ENCODE measurements at regions of chr17 and their contacts with region 1.

Region 1: DNA sequence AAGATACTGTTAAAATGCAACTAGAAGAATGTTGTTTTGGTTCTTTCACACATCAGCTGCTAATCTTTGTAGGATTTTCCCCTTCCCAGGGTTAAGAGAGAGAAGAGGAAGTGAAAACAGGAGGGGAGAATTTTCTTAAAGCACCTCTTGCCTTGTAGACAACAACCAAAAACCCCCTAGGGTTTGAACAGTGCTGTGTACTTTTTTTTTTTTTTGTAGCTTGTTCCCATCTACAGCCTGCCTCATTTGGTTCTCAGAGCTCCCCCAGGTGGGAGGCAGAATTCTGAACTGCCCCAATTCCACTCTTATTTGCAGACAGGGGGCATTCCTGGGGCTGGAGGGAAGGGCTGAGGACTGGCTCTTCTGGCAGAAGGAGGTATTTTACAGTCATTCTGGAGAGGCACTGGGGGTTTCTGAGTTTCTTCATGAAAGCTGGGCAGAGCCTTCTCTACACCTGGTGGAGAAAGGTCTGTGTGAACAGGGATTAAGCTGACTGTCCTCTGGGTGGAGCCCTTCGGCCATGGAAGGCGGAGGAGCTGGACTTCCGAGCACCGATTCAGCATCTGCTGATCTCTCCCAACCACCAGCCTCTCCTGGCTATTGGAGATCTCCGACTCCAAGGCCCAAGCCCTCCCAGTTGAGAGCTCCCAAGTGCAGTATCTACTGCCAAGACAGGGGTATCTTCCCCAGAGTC is 32.2 kb downstream of the SMARCE1 start:
- DNase-seq: peak; percentile 81
- CTCF ChIP-seq: peak; percentile 61

Region 2: GRCh38 chr17:40536295-40537171 is 78.9 kb before region 1 on chr17:
- CTCF ChIA-PET with region 1: interaction called, 16 read pairs
- POLR2A ChIA-PET with region 1: interaction called, 4 read pairs
- DNase-seq: no peak
- CTCF ChIP-seq: no peak

Region 3: DNA sequence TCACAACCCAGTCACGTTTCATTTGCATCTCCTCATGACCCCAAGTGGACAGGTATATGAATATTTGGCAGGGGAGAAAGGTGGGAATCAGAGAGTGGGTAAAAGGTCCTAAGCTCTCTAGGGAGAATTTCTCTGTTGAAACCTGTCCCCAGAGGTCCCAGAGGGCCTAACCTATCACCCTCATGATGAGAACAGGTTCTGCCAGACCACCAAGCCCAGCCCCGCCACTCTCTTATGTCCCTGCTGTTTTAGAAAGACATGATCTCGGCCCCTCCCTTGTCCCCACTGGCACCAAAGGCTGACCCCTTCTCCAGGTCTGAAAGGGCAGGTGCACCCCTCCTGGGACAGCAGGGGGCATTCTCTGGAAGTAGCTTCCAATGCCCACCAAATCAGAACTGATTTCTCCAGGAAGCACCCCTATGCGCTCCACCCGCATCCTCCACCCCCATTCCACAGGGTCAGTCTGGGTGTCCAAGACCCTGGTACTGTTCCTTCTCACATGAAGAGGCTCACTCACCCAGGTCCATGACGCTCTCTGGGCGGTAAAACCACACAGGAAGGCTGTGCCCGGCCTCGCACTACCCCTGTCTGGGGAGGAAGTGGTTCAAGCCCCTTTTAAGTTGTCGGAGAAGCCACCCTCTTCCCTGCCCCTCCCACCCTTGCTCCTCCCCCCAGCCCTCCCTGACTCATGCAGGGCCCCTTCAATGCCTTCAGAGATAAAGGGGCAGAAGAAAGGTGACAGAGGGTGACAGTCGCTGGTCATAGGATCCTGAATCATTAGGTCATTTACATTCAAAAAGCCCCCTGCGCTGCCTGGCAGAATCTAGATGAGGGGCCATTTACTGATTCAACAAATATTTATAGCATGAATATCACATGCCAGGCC is 50.3 kb before region 1 on chr17 and contains the start of gene CCR7:
- CTCF ChIA-PET with region 1: interaction called, 127 read pairs
- POLR2A ChIA-PET with region 1: interaction called, 64 read pairs
- DNase-seq: peak; percentile 65
- CTCF ChIP-seq: no peak

Region 4: DNA sequence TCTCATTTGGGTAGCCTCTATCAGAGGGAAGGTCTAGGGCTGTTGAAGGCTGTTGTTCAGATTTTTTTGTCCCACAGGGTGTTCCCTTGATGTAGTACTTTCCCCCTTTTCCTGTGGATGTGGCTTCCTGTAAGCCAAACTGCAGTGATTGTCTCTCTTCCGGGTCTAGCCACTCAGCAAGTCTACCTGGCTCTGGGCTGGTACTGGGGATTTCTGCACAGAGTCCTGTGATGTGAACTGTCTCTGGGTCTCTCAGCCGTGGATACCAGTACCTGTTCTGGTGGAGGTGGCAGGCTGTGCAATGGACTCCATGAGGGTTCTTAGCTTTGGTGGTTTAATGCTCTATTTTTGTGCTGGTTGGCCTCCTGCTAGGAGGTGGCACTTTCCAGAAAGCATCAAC is 26.9 kb before region 1 on chr17:
- CTCF ChIA-PET with region 1: interaction called, 17 read pairs
- POLR2A ChIA-PET with region 1: no interaction called
- DNase-seq: no peak
- CTCF ChIP-seq: no peak

Region 5: GRCh38 chr17:40647624-40648383 is 32.4 kb after region 1 on chr17 and contains the start of gene SMARCE1:
- CTCF ChIA-PET with region 1: interaction called, 27 read pairs
- POLR2A ChIA-PET with region 1: interaction called, 4 read pairs
- DNase-seq: peak; percentile 81
- CTCF ChIP-seq: no peak

Region 6: GRCh38 chr17:40726919-40727318 is 111.5 kb after region 1 on chr17:
- CTCF ChIA-PET with region 1: no interaction called
- POLR2A ChIA-PET with region 1: no interaction called
- DNase-seq: no peak
- CTCF ChIP-seq: peak; percentile 8